PC-9 (cell line): ENCODE measurements at regions of chr2 and their contacts with region 1.

Region 1: DNA sequence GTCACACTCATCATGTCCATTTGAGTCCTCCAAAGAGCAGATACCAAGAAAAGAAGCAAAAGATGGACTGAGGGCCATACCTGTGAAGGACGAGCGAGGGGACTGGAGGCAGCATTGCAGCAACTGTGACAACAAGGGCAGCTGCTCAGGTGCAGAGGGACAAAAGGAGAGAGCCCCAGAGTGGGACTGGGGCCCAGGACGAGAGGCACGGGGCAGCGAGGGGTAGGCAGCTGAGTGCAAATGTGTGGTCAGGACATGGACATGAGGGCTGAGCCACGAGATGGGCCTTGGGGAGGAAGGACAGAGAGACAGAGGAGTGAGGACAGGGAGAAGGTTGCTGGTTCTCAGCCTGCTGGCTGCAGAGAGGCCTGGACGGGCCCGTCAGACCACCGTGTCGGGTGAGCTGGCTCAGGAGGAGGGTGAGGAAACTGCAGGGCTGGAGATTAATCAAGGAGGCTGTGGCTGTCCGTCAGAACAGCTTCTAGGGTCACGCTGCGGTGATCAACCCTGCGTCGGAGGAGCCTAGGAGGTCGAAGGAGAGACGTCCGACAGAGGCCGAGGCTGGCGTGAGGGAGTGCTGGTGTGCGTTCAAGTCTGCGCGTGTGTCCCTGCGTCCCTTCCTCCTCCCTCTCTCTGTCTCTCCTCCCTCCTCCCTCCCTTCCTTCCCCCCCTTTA is 206.8 kb upstream of the HDAC4 start:
- DNase-seq: no peak
- H3K4me3 ChIP-seq: no peak overlapping the region
- H3K27ac ChIP-seq: no peak overlapping the region
- H3K4me1 ChIP-seq: no peaks in the 10 kb centered on the region
- H3K27me3 ChIP-seq: peaks cover 97% of the 10 kb centered on the region
- CTCF ChIP-seq: no peak

Region 2: DNA sequence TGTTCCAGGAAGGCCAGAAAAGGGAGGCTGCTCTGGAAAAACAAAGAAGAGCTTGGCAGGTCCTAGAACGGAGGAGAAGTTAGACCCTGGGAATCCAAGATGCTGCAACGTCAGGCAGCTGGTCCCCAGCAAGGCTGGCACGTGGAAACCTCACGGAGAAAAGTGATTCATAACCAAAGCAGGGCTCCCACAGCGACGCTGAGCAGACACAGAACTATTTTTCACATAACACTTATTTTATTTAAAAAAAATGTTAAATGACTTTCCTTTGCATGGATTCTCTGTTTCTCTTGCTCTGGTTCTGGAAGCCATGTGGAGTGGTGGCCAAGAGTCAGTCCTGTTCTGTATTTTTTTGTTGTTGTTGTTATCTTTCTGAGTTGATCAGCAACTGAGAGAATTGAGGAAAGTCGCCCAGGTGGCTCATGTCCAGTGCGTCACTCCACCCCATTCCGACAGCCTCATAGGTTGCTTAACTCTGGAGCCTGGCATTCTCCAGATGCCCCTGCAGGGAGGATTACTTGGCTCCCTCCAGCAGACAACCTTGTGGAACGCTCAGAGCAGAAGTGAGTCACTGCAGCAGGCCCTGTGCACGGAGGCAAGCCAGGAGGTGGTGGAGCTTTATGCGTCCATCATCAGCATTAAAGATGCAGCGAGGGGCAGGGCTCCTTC is 23.1 kb after region 1 on chr2:
- CTCF ChIA-PET with region 1: no interaction called
- POLR2A ChIA-PET with region 1: interaction called, 31 read pairs
- intact Hi-C with region 1: no loop called
- DNase-seq: peak; percentile 14 to 60
- H3K4me3 ChIP-seq: no peak overlapping the region
- H3K27ac ChIP-seq: no peak overlapping the region
- H3K4me1 ChIP-seq: no peaks in the 10 kb centered on the region
- H3K27me3 ChIP-seq: peaks cover 80% of the 10 kb centered on the region
- CTCF ChIP-seq: no peak